ENCODE measurements at regions of chr17 and their contacts with region 1.

Region 1: DNA sequence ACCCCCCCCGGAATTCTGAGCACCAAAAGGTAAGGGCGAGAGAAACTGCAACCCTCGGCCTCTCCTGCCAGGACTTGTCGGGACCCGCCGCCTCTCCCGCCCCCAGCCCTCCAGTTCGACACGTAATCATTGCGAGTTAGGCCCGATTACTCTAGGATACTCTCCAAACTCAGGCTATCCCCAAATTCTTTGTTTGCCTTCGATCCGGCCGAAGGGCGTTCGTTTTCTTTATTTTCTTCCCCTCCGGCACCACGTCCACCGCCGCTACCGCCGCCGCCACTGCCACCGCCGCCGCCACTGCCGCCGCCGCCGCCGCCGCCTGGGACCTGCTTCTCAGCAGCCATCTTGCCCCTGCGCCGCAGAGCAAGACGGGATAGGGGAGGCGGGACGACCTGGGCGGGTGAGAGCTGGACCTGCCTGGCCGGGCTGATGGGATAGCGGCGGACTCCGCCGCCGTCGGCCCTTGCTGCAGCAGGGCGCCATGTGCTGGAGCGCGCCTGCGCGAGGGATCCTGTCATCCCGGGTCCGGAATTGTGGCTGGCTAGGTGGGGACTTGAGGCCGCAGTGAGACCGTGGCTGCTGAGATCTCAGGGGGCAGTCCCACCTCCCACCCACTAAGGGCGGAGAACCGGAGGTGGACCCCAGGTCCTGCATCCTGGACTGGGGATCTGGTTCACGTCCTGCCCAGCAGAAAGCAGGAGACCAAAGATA is at the start of gene SRP68:
- DNase-seq: peak; percentile 73 to 80 (median 77)
- H3K4me3 ChIP-seq: peak within 1 kb of the TSS; percentile 81 to 97
- H3K4me3 Mint-ChIP-seq: peak within 1 kb of the TSS; percentile 95 to 98 (median 97)
- H3K27ac ChIP-seq: peak within 1 kb of the TSS; percentile 86
- H3K27ac Mint-ChIP-seq: peak within 1 kb of the TSS; percentile 89 to 98 (median 97)
- H3K4me1 ChIP-seq: peaks cover 56% of the 10 kb centered on the region
- H3K4me1 Mint-ChIP-seq: peaks cover 31 to 60% (median 46%) of the 10 kb centered on the region in 4 donors
- H3K27me3 ChIP-seq: peaks cover 22% of the 10 kb centered on the region
- H3K27me3 Mint-ChIP-seq: peaks cover 17 to 21% of the 10 kb centered on the region in 2 donors
- total RNA-seq, gene SRP68: 86.5 to 92.4 TPM

Region 2: DNA sequence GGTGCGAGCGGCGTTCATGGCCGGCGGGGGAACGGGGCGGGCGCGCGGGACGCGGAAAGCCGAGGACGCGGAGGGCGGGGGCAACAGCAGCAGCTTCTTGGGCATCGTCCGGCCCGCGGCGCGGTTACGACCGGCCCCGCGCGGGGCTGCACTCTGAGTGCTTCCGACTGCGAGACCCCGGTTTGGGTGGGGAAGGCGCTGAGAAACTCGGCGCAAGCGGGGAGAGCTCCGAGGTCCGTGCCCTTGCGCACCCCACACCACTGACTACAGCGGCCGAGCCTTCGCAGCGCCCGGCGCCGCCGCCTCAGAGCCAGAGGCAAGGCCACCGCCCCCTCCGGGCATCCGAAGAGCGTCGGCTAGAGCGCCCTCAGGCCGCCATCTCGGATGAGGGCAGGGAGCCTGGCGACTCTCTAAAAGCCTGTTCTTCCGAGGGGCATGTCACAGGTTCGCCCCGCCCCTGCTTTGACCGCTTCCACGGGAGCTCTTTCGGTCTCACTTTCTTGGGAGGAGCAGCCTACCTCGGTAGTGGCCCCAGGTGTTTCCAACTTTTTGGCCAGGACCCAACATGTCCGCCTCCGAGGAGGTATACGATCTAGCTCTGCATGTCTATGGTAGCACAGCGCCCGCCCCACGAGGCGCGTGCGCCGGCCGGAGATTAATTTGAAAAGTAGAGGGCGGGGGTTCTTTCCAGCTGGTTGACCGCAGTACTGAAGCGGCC is 281.5 kb after region 1 on chr17 and contains the start of gene PRPSAP1:
- CTCF ChIA-PET with region 1: no interaction called
- POLR2A ChIA-PET with region 1: interaction called, 7 read pairs
- intact Hi-C with region 1: loop called (anchors 1 kb)
- DNase-seq: peak; percentile 82 to 90 (median 85)
- H3K4me3 ChIP-seq: peak within 1 kb of the TSS; percentile 52 to 88
- H3K4me3 Mint-ChIP-seq: peak within 1 kb of the TSS; percentile 92 to 99 (median 96)
- H3K27ac ChIP-seq: peak within 1 kb of the TSS; percentile 77
- H3K27ac Mint-ChIP-seq: peak within 1 kb of the TSS; percentile 82 to 99 (median 98)
- H3K4me1 ChIP-seq: peaks cover 16% of the 10 kb centered on the region
- H3K4me1 Mint-ChIP-seq: peaks cover 12 to 29% (median 20%) of the 10 kb centered on the region in 4 donors
- H3K27me3 ChIP-seq: no peaks in the 10 kb centered on the region
- H3K27me3 Mint-ChIP-seq: no peaks in the 10 kb centered on the region
- total RNA-seq, gene PRPSAP1: 63.4 to 65.8 TPM